ENCODE measurements at regions of chr2 and their contacts with region 1.

Region 1: GRCh38 chr2:113209011-113209641 is 35.4 kb downstream of the PSD4 start:
- DNase-seq: no peak
- ATAC-seq: no peak
- H3K4me3 ChIP-seq: no peak overlapping the region
- H3K27ac ChIP-seq: no peak overlapping the region
- H3K4me1 ChIP-seq: peaks cover 0 to 3% (median 0%) of the 10 kb centered on the region in 4 donors
- H3K27me3 ChIP-seq: no peaks in the 10 kb centered on the region
- CTCF ChIP-seq: no peak
- POLR2A ChIP-seq: no peak

Region 2: DNA sequence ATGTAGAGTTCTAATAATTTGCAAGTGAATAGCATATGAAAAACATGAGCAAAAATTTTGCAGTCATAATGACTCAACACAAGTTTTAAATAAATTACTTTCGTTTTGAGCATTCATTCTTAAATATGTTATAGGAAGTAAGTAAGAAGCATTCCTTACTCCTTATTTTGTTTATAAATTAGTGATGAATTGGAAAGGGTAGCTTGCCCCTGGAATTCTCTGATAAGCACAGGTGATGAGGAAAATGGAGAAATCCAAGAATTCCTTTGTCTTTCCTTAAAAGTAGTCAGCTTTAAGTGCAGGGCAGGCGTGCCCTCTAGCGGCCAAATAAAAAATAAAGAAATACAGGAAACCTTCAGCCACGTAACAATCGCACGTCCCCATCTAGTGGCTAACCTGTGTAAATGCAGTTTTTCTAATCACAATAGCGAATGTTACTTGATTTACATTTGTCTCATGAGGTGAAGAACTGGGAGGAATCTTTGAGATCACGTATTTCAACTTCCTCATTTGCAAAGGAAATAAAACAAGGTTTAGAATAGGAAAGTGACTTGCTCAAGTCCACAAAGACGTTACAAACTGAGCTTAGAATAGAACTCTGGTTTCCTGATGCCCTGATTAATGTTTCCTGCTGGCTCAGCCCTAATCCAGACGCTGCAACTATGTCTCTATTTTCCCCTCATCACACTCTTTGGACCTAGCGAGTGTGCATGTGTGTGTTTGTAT is 181.2 kb after region 1 on chr2:
- intact Hi-C with region 1: loop called in 1 of 2 experiments (anchors 5 kb)
- DNase-seq: peak in 1 of 3 donors; percentile 65
- ATAC-seq: peak; percentile 97 to 99 (median 98)
- H3K4me3 ChIP-seq: peak overlapping the region in 1 of 3 donors; percentile 11
- H3K27ac ChIP-seq: no peak overlapping the region
- H3K4me1 ChIP-seq: no peaks in the 10 kb centered on the region
- H3K27me3 ChIP-seq: no peaks in the 10 kb centered on the region
- CTCF ChIP-seq: peak; percentile 68 to 96 (median 94)
- POLR2A ChIP-seq: no peak